OCI-LY7 (cell line): ENCODE measurements at regions of chr6 and their contacts with region 1.

Region 1: DNA sequence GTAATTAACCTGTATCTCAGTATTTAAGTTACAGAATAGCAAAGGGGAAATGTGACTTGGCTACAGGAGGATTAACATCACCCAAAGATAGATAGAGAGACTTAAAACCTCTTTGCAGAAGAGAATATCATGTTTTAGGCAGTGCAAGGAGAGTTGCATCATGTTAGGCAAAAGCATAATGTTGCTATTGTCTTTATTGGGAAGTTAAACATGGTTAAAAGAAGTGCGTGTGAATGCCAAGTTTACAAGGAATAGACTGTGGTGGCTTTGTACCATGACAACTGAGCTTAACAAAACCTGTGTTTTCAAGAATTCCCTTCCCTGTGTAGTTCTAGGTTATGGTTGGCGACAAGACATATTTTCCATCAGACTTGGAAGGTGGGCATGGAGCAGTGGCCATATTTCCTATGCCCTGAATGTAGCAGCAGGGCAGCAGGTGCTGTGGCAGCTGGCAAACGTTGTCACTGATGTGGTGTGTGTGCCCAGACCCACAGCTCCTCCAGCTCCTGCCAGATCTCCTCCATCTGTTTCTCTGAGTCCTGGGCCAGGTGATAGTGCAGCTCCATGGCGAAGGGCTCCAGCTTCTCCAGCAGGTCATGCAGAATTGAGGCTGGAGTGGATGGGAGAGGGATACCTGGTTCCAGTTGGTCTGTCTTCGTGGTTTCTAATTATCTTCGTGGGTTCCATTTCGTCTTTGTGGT is 163.3 kb downstream of the QRSL1 start:
- DNase-seq: no peak
- H3K4me3 ChIP-seq: no peak overlapping the region
- H3K27ac ChIP-seq: no peak overlapping the region
- H3K4me1 ChIP-seq: no peaks in the 10 kb centered on the region
- CTCF ChIP-seq: no peak

Region 2: DNA sequence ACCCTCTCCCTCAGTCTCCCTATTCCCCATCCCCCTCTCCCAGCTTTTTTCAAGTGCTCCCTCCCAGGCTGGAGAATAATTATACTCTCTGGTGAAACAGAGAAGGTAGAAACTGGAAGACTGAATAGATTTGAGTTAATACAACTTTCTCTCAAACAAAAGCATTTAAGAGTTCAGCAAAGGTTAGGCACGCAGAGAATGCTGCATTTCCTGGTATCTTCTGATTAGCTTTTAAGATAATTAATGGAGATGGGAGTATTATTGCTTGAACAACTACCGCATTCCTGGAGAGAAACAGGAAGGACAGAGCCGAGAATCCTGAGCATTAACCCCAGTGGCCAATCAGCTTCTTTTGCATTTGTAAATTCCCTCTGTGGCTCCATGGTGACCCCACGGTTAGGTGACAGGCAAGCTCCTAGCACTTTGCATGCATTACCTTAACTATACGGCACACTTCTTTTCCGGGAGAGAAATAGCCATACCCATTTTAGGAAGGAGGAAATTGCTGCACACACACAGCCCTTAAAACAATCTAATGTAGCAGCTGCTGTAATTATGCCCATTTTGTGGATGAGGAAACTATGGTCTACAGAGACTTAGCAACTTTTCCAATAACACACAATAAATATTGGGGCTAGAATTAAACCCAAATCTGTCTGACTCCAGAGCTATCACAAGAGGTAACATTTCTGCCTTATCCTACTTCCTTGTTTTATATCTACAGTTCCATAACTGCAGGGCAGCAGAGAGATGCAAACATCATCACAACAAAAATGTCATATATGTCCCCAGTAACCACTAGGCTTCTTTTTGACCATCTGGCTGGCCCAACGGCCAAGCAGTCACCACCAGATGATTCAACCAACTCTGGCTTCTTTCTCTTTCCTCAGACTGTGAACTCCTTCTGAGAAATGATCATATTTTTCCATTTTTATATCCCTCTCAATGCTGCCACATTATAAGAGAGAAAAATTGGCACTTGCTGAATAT is 12.0 kb after region 1 on chr6:
- CTCF ChIA-PET with region 1: no interaction called
- POLR2A ChIA-PET with region 1: interaction called, 11 read pairs
- intact Hi-C with region 1: no loop called
- DNase-seq: no peak
- H3K4me3 ChIP-seq: no peak overlapping the region
- H3K27ac ChIP-seq: no peak overlapping the region
- H3K4me1 ChIP-seq: no peaks in the 10 kb centered on the region
- CTCF ChIP-seq: no peak